CD14-positive monocyte (primary cell): ENCODE measurements at regions of chr4 and their contacts with region 1.

Region 1: GRCh38 chr4:177339477-177340374 is 30.1 kb downstream of the NEIL3 start:
- DNase-seq: peak; percentile 13 to 44 (median 39)
- H3K4me3 ChIP-seq: no peak overlapping the region
- H3K4me3 Mint-ChIP-seq: no peak overlapping the region
- H3K27ac ChIP-seq: peak overlapping the region in 1 of 2 donors; percentile 21
- H3K27ac Mint-ChIP-seq: peak overlapping the region in 4 of 7 donors; percentile 45 to 82 (median 66)
- H3K4me1 ChIP-seq: no peaks in the 10 kb centered on the region
- H3K4me1 Mint-ChIP-seq: peaks cover 5% of the 10 kb centered on the region
- H3K27me3 ChIP-seq: no peaks in the 10 kb centered on the region
- H3K27me3 Mint-ChIP-seq: no peaks in the 10 kb centered on the region
- CTCF ChIP-seq: peak; percentile 75

Region 2: DNA sequence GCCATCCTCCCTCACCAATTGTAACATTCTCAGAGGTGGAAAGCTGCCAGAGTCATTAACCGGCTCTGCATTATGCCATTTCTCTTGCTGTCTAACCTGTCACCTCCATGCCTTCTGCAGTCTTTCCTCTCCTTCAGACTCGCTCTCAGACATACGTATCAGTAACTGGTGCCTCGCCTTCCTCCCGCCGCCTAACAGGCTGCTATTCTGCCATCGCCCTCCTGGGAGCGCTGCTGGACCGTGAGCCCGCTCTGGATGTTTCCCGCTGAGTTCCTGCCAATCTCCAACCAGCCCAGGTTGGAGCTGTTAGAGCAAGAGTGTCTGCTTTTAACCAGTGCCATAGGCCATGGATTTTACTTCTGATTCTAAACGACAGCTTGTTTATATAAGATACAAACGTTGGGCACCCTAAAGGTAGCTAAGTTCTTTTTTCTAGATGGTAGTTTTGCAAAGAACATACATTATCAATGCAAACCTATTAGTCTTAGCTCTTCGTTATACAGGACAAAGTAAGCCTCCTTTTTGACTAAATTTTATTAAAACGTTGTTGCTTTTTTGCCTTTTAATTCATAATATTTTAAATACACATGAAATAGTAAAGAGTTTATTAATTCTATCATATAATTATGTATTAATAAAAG is 89.5 kb before region 1 on chr4:
- intact Hi-C with region 1: loop called (anchors 2 to 5 kb)
- DNase-seq: peak; percentile 41 to 65 (median 62)
- H3K4me3 ChIP-seq: no peak overlapping the region
- H3K4me3 Mint-ChIP-seq: peak overlapping the region in 1 of 2 donors; percentile 26
- H3K27ac ChIP-seq: no peak overlapping the region
- H3K27ac Mint-ChIP-seq: no peak overlapping the region
- H3K4me1 ChIP-seq: peaks cover 5 to 7% of the 10 kb centered on the region in 2 donors
- H3K4me1 Mint-ChIP-seq: peaks cover 12% of the 10 kb centered on the region
- H3K27me3 ChIP-seq: no peaks in the 10 kb centered on the region
- H3K27me3 Mint-ChIP-seq: peaks cover 5 to 11% (median 7%) of the 10 kb centered on the region in 3 donors
- CTCF ChIP-seq: peak; percentile 99